ENCODE measurements at regions of chr7 and their contacts with region 1.

Region 1: GRCh38 chr7:148932-149855 is 43.2 kb upstream of the FAM20C start:
- DNase-seq: peak; percentile 100
- H3K4me3 ChIP-seq: peak overlapping the region; percentile 42 to 52 (median 48)
- H3K27ac ChIP-seq: peak overlapping the region; percentile 82 to 92 (median 90)
- H3K4me1 ChIP-seq: peaks cover 0 to 12% (median 10%) of the 10 kb centered on the region in 4 donors
- H3K27me3 ChIP-seq: no peaks in the 10 kb centered on the region
- CTCF ChIP-seq: no peak
- EP300 ChIP-seq: peak in 1 of 4 donors; percentile 52
- POLR2A ChIP-seq: peak; percentile 81 to 93

Region 2: GRCh38 chr7:162632-163297 is 13.6 kb after region 1 on chr7:
- intact Hi-C with region 1: loop called (anchors 1 kb)
- DNase-seq: no peak
- H3K4me3 ChIP-seq: no peak overlapping the region
- H3K27ac ChIP-seq: no peak overlapping the region
- H3K4me1 ChIP-seq: peaks cover 0 to 12% (median 0%) of the 10 kb centered on the region in 4 donors
- H3K27me3 ChIP-seq: peaks cover 0 to 3% (median 0%) of the 10 kb centered on the region in 3 donors
- CTCF ChIP-seq: no peak
- EP300 ChIP-seq: no peak
- POLR2A ChIP-seq: no peak

Region 3: DNA sequence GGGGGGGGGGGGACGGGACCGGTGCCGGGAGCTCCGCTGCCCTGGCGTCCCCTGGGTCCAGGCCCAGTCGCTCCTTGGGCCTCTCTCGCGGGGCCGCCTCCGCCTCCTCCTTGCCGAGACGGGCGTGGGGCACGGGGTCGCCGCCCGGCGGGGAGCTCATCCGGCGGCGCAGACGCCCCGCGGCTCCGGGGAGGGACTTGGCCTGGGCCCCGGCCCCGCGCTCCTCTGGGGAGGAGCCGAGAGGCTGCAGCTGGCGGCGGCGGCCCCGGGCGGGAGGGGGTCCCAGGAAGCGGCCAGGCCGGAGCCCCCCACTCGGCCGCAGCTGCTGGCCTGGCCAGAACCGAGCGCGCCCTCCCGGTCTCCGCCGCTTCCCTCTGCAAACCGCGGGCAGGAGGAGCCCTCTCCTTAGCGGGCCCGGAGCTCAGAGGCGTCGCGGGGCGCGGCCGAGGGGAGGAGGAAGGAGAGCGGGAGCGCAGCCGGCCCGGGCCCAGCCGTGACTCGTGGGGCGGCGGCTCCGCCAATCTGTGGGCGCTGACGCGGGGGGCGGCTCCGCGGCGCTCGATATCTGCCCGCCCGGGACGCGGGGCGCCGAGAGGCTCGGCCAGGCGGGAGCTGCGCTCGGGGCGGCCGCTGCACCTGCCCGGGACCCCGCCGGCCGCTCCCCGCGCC is 42.9 kb after region 1 on chr7 and contains the start of gene FAM20C:
- intact Hi-C with region 1: loop called (anchors 2 kb)
- DNase-seq: peak; percentile 95
- H3K4me3 ChIP-seq: peak within 1 kb of the TSS; percentile 53 to 85 (median 75)
- H3K27ac ChIP-seq: peak within 1 kb of the TSS; percentile 87 to 95 (median 94)
- H3K4me1 ChIP-seq: peaks cover 0 to 51% (median 47%) of the 10 kb centered on the region in 4 donors
- H3K27me3 ChIP-seq: no peaks in the 10 kb centered on the region
- CTCF ChIP-seq: no peak
- EP300 ChIP-seq: no peak
- POLR2A ChIP-seq: peak in 1 of 2 donors; percentile 58
- total RNA-seq, gene FAM20C: 18.4 to 51.3 (median 23.3) TPM

Region 4: GRCh38 chr7:234655-235578 is 85.7 kb after region 1 on chr7:
- intact Hi-C with region 1: loop called (anchors 5 kb)
- DNase-seq: peak; percentile 92
- H3K4me3 ChIP-seq: peak overlapping the region; percentile 8 to 31 (median 24)
- H3K27ac ChIP-seq: peak overlapping the region; percentile 84 to 97 (median 94)
- H3K4me1 ChIP-seq: peaks cover 0 to 73% (median 68%) of the 10 kb centered on the region in 4 donors
- H3K27me3 ChIP-seq: no peaks in the 10 kb centered on the region
- CTCF ChIP-seq: no peak
- EP300 ChIP-seq: peak in 2 of 4 donors; percentile 7 to 50
- POLR2A ChIP-seq: no peak

Region 5: GRCh38 chr7:552868-553635 is 403.9 kb after region 1 on chr7:
- intact Hi-C with region 1: no loop called
- DNase-seq: no peak
- H3K4me3 ChIP-seq: no peak overlapping the region
- H3K27ac ChIP-seq: no peak overlapping the region
- H3K4me1 ChIP-seq: no peaks in the 10 kb centered on the region
- H3K27me3 ChIP-seq: no peaks in the 10 kb centered on the region
- CTCF ChIP-seq: no peak
- EP300 ChIP-seq: no peak
- POLR2A ChIP-seq: no peak